Activated CD8-positive, alpha-beta T cell treated with anti-CD3 and anti-CD28 coated beads, Interleukin-2, amount 10 ng/mL, durations not matched to agents 7 days and 5 days (primary cell): ENCODE measurements at regions of chr12 and their contacts with region 1.

Region 1: GRCh38 chr12:96208801-96209549 is 14.8 kb downstream of the ELK3 start:
- DNase-seq: no peak
- ATAC-seq: no peak
- H3K4me3 Mint-ChIP-seq: peak overlapping the region; percentile 24
- H3K27ac Mint-ChIP-seq: peak overlapping the region; percentile 47
- H3K4me1 Mint-ChIP-seq: peaks cover 91% of the 10 kb centered on the region
- H3K27me3 Mint-ChIP-seq: no peaks in the 10 kb centered on the region

Region 2: DNA sequence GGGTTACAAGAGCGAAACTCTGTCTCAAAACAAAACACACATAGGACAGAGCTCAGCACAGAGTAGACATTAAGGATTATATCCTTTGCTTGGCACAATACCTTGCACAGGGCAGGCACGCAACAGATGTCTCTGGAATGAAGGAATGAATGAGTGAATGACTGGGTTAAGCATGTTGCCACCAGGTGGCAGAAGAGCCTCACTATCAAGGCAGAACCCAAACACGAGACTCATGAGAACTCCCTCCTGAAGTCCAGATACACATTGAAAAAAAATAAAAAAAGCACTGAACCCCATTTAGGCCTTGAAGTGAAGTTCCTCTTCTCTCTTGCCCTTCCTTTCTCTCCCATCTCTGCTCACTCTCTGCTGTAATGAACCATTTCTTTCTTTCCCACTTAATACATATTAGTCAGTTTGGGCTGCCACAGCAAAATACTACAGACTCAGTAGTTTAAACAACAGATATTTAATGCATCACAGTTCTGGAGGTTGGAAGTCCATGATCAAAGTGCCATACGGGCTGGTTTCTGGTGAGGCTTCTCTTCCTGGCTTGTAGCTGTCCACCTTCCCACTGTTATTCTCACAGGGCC is 147.0 kb before region 1 on chr12:
- CTCF ChIA-PET with region 1: interaction called, 130 read pairs
- POLR2A ChIA-PET with region 1: no interaction called
- DNase-seq: peak; percentile 85
- ATAC-seq: peak; percentile 80
- H3K4me3 Mint-ChIP-seq: no peak overlapping the region
- H3K27ac Mint-ChIP-seq: peak overlapping the region; percentile 5
- H3K4me1 Mint-ChIP-seq: peaks cover 24% of the 10 kb centered on the region
- H3K27me3 Mint-ChIP-seq: no peaks in the 10 kb centered on the region

Region 3: DNA sequence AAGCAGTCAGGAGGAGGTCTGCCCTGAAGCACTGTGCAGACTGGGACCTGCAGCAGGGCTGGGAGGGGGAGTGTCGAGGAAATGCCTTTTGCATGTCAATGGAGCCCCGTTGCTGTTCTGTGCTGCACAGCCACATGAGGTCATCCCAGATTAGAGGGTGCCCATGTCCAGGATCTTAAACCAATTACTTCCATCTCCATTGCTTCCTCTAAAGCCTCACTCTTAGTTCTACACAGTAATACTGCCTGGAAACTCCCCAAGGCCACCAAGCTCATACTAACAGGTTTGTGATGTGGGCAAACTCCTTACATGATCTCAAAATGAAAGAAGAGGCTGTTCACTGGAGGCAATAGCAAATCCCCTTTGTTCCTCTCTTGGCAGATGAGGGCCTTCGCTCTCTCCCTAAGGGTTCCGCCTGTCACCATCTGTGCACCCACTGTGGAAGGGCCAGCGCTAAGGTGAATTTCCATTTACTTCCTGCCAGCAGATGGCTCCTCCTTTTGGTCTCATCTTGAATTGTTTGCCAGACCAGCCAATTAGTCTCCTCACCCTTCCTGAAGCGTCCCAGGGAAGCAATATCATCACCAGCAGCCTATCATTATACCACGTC is 138.2 kb before region 1 on chr12:
- CTCF ChIA-PET with region 1: interaction called, 130 read pairs
- POLR2A ChIA-PET with region 1: no interaction called
- DNase-seq: no peak
- ATAC-seq: no peak
- H3K4me3 Mint-ChIP-seq: no peak overlapping the region
- H3K27ac Mint-ChIP-seq: no peak overlapping the region
- H3K4me1 Mint-ChIP-seq: peaks cover 11% of the 10 kb centered on the region
- H3K27me3 Mint-ChIP-seq: peaks cover 16% of the 10 kb centered on the region

Region 4: GRCh38 chr12:96194971-96195844 is 13.8 kb before region 1 on chr12:
- CTCF ChIA-PET with region 1: interaction called, 50 read pairs
- POLR2A ChIA-PET with region 1: interaction called, 15 read pairs
- DNase-seq: peak; percentile 79
- ATAC-seq: peak; percentile 73
- H3K4me3 Mint-ChIP-seq: peak overlapping the region; percentile 93
- H3K27ac Mint-ChIP-seq: peak overlapping the region; percentile 93
- H3K4me1 Mint-ChIP-seq: peaks cover 52% of the 10 kb centered on the region
- H3K27me3 Mint-ChIP-seq: no peaks in the 10 kb centered on the region